Kidney (tissue), 22 donors: ENCODE measurements at regions of chr1 and their contacts with region 1.

Region 1: GRCh38 chr1:205658943-205659581 is 21.2 kb downstream of the SLC45A3 start:
- DNase-seq: peak; percentile 75 to 90 (median 82)
- H3K4me3 ChIP-seq: no peak overlapping the region
- H3K27ac ChIP-seq: no peak overlapping the region
- H3K4me1 ChIP-seq: no peaks in the 10 kb centered on the region
- H3K27me3 ChIP-seq: no peaks in the 10 kb centered on the region
- CTCF ChIP-seq: peak; percentile 93

Region 2: DNA sequence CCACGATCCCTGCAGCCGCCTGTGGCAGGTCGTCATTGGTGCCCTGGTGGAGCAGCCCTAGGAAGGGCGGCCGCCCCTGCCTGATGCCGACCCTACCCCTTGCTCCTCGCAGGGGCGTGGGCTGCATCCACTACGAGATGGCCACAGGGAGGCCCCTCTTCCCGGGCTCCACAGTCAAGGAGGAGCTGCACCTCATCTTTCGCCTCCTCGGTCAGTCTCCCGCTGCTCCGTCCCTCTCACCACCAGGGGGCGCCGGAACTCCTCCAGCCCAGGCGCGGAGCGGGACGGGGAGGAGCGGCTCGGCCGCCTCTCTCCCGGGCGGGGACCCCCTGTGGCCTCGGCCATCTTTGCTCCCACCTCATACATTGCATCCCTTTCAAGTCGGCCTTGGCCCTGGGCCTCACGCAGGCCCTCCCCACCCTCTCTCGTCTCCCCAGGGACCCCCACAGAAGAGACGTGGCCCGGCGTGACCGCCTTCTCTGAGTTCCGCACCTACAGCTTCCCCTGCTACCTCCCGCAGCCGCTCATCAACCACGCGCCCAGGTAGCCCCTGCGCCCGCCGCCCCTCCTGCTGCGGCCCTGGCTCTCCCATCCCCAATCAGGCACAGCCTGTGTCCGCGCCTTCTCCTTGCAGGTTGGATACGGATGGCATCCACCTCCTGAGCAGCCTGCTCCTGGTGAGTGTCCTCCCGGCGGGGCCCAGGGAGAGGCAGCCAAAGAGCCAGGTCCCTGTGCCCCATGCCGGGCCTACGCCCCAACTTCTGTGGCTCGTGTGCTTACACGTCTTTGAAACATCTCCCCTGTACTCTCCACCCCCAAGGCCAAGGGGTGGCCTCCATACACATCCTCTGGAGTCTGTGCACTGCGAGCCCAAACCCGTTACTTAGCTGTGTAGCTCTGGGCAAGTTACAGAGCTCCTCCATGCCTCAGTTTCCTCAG is 129.9 kb before region 1 on chr1:
- intact Hi-C with region 1: loop called (anchors 5 kb)
- DNase-seq: peak; percentile 86 to 93 (median 90)
- H3K4me3 ChIP-seq: peak overlapping the region in 1 of 3 donors; percentile 43
- H3K27ac ChIP-seq: no peak overlapping the region
- H3K4me1 ChIP-seq: peaks cover 0 to 2% (median 0%) of the 10 kb centered on the region in 3 donors
- H3K27me3 ChIP-seq: no peaks in the 10 kb centered on the region
- CTCF ChIP-seq: peak; percentile 88

Region 3: GRCh38 chr1:205591522-205592351 is 67.3 kb before region 1 on chr1:
- intact Hi-C with region 1: loop called (anchors 2 kb)
- DNase-seq: peak; percentile 90 to 94 (median 93)
- H3K4me3 ChIP-seq: peak overlapping the region; percentile 60 to 84 (median 68)
- H3K27ac ChIP-seq: peak overlapping the region; percentile 45 to 61
- H3K4me1 ChIP-seq: peaks cover 0 to 3% (median 3%) of the 10 kb centered on the region in 3 donors
- H3K27me3 ChIP-seq: no peaks in the 10 kb centered on the region
- CTCF ChIP-seq: peak; percentile 99

Region 4: GRCh38 chr1:205812878-205813754 is 154.1 kb after region 1 on chr1 and contains the start of gene SLC41A1:
- intact Hi-C with region 1: no loop called
- DNase-seq: peak; percentile 94 to 97 (median 96)
- H3K4me3 ChIP-seq: peak within 1 kb of the TSS; percentile 69 to 92 (median 81)
- H3K27ac ChIP-seq: peak within 1 kb of the TSS; percentile 75 to 85
- H3K4me1 ChIP-seq: peaks cover 0 to 24% (median 24%) of the 10 kb centered on the region in 3 donors
- H3K27me3 ChIP-seq: no peaks in the 10 kb centered on the region
- CTCF ChIP-seq: no peak
- total RNA-seq, gene SLC41A1: 19.1 TPM